ENCODE measurements at regions of chr6 and their contacts with region 1.

Region 1: DNA sequence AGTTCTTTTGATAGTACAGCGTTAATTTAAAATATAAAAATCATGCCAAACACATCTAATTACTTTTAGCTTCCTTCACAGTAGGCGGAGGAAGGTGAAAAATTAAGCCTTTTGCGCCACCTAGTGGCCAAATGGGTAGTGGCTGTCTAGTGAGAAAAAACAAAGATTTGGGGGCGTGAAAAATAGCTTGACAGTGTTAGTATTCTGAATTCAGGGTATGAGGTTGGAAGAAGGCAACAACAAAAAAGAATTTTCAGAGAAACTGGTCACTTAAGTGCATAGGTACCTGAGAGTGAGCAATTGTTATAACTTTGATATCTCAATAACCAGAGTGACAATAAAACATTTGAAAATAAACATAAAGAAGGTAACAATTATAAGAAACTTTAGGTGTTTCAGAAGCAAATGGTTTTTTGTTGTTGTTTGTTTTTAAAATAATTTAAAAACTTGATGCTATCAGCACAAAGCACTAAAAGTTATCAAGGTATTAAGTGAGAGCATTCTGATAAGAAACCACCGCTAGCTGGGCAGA is 14.3 kb downstream of the PSMB9 start:
- DNase-seq: peak; percentile 65
- ATAC-seq: peak; percentile 90
- H3K4me3 ChIP-seq: no peak overlapping the region
- H3K27ac ChIP-seq: no peak overlapping the region
- H3K4me1 ChIP-seq: no peaks in the 10 kb centered on the region
- H3K27me3 ChIP-seq: peaks cover 19% of the 10 kb centered on the region
- CTCF ChIP-seq: peak; percentile 94
- POLR2A ChIP-seq: no peak
- RAD21 ChIP-seq: peak; percentile 83

Region 2: DNA sequence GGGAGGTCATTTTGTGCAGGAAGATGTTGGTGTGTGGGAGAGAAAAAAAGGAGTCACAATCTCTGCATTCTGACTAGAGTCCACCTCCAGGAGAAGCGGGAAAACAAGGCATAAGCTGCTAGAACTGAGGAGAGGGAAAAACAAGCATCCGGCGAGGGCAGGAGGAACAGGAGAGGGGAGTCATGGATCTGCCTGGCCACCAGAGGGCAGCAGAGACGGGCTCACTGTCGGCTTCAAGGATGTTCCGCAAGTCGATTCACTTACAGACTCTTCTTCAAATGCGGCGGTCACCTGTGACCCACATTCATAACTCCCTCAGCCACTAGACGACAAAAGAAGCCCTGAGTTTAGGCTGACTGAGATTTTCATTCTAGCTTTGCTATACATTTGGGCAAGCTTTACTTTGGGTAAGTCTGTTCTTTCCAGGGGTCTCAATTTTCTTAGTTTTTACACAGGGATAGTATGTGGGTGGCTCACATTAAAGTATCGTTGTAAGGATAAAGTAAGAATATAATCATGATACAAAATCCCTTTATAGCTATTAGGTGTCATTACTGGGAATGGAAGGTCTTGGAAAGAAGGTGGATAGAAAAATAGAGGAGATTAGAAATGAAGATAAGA is 454.8 kb before region 1 on chr6:
- CTCF ChIA-PET with region 1: interaction called, 6 read pairs
- POLR2A ChIA-PET with region 1: no interaction called
- dilution Hi-C with region 1: no loop called
- in situ Hi-C with region 1: no loop called
- intact Hi-C with region 1: loop called (anchors 1 kb)
- DNase-seq: peak; percentile 69
- ATAC-seq: peak; percentile 93
- H3K4me3 ChIP-seq: no peak overlapping the region
- H3K27ac ChIP-seq: no peak overlapping the region
- H3K4me1 ChIP-seq: no peaks in the 10 kb centered on the region
- H3K27me3 ChIP-seq: peaks cover 24% of the 10 kb centered on the region
- CTCF ChIP-seq: peak; percentile 83
- POLR2A ChIP-seq: no peak
- RAD21 ChIP-seq: peak; percentile 72

Region 3: GRCh38 chr6:32666420-32667300 is 201.7 kb before region 1 on chr6 and contains the start of gene HLA-DQB1:
- CTCF ChIA-PET with region 1: no interaction called
- POLR2A ChIA-PET with region 1: no interaction called
- dilution Hi-C with region 1: no loop called
- in situ Hi-C with region 1: no loop called
- intact Hi-C with region 1: loop called (anchors 10 kb)
- DNase-seq: no peak
- ATAC-seq: no peak
- H3K4me3 ChIP-seq: no peak within 1 kb of the TSS
- H3K27ac ChIP-seq: no peak within 1 kb of the TSS
- H3K4me1 ChIP-seq: no peaks in the 10 kb centered on the region
- H3K27me3 ChIP-seq: no peaks in the 10 kb centered on the region
- CTCF ChIP-seq: no peak
- POLR2A ChIP-seq: no peak
- RAD21 ChIP-seq: no peak
- total RNA-seq, gene HLA-DQB1: not detected in 2 replicates

Region 4: GRCh38 chr6:32825966-32826365 is 42.4 kb before region 1 on chr6:
- CTCF ChIA-PET with region 1: interaction called, 9 read pairs
- POLR2A ChIA-PET with region 1: interaction called, 8 read pairs
- dilution Hi-C with region 1: no loop called
- in situ Hi-C with region 1: no loop called
- intact Hi-C with region 1: loop called (anchors 1 kb)
- DNase-seq: peak; percentile 55
- ATAC-seq: peak; percentile 57
- H3K4me3 ChIP-seq: no peak overlapping the region
- H3K27ac ChIP-seq: no peak overlapping the region
- H3K4me1 ChIP-seq: peaks cover 2% of the 10 kb centered on the region; the same call in 1 of the 2 replicates
- H3K27me3 ChIP-seq: no peaks in the 10 kb centered on the region
- CTCF ChIP-seq: peak; percentile 36
- POLR2A ChIP-seq: no peak
- RAD21 ChIP-seq: peak; percentile 47

Region 5: DNA sequence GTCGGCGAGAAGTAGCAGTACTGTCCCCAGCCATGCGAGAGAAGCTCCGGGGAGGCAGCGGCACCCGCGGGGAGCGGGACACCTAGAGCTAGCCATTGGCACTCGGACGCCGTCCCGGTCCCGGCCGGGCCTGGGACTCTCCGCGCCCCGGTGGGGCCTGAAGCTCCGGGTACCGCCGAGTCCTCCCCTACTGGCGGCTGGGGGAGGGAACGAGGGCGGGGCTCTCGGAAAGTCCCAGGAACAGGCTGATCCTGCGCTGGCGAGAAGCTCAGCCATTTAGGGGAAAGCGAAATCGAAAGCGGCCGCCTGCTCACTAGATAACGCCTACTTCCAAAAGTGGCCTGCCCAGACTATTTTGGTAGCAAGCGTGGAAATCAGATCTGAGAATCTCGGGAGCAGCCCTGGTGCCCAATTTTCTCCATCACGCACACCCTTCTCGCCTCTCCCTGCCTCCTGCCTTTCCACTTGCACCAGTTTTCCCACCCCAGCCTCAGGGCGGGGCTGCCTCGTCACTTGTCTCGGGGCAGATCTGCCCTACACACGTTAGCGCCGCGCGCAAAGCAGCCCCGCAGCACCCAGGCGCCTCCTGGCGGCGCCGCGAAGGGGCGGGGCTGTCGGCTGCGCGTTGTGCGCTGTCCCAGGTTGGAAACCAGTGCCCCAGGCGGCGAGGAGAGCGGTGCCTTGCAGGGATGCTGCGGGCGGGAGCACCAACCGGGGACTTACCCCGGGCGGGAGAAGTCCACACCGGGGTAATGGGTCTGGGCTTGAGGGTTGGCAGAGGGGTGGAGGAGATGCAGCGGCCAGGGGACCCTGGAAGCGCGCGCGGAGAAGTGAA is 14.6 kb before region 1 on chr6 and contains the starts of genes PSMB9 and TAP1:
- CTCF ChIA-PET with region 1: interaction called, 15 read pairs
- POLR2A ChIA-PET with region 1: interaction called, 3 read pairs
- dilution Hi-C with region 1: no loop called
- in situ Hi-C with region 1: no loop called
- intact Hi-C with region 1: no loop called
- DNase-seq: peak; percentile 90
- ATAC-seq: peak; percentile 93
- H3K4me3 ChIP-seq: peak within 1 kb of the TSS; percentile 57
- H3K27ac ChIP-seq: peak within 1 kb of the TSS; percentile 75
- H3K4me1 ChIP-seq: peaks cover 4% of the 10 kb centered on the region
- H3K27me3 ChIP-seq: no peaks in the 10 kb centered on the region
- CTCF ChIP-seq: peak; percentile 85
- POLR2A ChIP-seq: peak; percentile 41; the same call in 1 of the 2 replicates
- RAD21 ChIP-seq: peak; percentile 57
- total RNA-seq, gene PSMB9: 8.3 and 9.0 TPM in 2 replicates
- total RNA-seq, gene TAP1: 20.8 and 27.6 TPM in 2 replicates

Measured in IMR-90 (cell line).